Ascending aorta (tissue), 2 donors: ENCODE measurements at regions of chr6 and their contacts with region 1.

Region 1: GRCh38 chr6:27479319-27480182 is 6.6 kb upstream of the ZNF184 start:
- DNase-seq: peak; percentile 53 to 93
- H3K4me3 ChIP-seq: peak overlapping the region; percentile 77 to 94
- H3K27ac ChIP-seq: peak overlapping the region; percentile 98 to 99
- H3K4me1 ChIP-seq: no peaks in the 10 kb centered on the region
- H3K27me3 ChIP-seq: no peaks in the 10 kb centered on the region
- CTCF ChIP-seq: no peak

Region 2: DNA sequence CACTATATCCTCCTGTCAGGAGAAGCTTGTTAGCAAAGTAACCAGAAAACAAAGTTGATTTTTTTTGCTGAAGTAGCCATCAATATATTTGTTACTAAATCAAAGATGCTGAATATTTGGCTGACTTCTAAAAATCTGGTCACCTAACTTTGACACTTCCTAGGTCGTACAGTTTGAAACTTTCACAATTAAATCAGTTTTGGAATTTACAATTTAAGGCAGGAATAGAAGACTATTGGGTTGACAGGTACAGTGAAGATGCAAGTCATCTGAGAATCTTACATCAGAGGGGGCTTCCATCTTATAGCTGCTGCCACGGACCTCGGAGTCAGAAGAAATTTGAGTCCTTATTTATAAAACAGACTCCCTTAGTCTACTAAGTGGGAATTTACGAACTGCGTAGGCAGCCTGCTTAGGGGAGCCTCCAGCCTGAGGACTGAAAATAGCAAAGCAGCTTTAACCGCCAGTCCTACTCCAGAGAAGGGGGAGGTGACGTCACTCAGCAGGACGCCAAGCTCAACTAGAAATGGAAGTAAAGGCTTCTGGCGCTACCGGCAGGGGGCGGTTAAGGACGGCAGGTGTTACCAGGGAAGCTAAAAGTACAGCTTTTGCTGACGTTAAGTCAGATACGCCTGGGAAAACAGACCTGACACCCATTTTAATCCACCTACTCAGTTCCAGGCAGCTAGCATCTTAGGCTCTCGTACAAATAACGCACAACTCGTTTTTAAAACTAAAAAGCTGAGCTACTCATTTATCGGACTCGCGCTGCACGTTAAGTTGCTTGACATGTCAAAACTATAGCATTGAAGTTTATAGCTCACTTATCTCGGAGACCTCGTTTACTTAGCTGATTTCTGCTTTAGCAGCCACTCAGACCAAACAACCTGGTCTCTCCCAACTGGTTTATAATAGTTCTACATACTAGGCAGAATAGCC is 1453.4 kb before region 1 on chr6:
- intact Hi-C with region 1: loop called (anchors 5 kb)
- DNase-seq: peak; percentile 96 to 99
- H3K4me3 ChIP-seq: peak overlapping the region; percentile 64 to 75
- H3K27ac ChIP-seq: peak overlapping the region; percentile 90 to 97
- H3K4me1 ChIP-seq: peaks cover 0 to 19% of the 10 kb centered on the region in 2 donors
- H3K27me3 ChIP-seq: no peaks in the 10 kb centered on the region
- CTCF ChIP-seq: peak; percentile 80 to 87 (median 82)

Region 3: GRCh38 chr6:27188885-27189418 is 290.6 kb before region 1 on chr6:
- intact Hi-C with region 1: loop called (anchors 1 kb)
- DNase-seq: peak in 1 of 2 donors; percentile 76
- H3K4me3 ChIP-seq: peak overlapping the region; percentile 75 to 78
- H3K27ac ChIP-seq: peak overlapping the region; percentile 85 to 90
- H3K4me1 ChIP-seq: peaks cover 0 to 2% of the 10 kb centered on the region in 2 donors
- H3K27me3 ChIP-seq: no peaks in the 10 kb centered on the region
- CTCF ChIP-seq: peak; percentile 63 to 82 (median 71)

Region 4: DNA sequence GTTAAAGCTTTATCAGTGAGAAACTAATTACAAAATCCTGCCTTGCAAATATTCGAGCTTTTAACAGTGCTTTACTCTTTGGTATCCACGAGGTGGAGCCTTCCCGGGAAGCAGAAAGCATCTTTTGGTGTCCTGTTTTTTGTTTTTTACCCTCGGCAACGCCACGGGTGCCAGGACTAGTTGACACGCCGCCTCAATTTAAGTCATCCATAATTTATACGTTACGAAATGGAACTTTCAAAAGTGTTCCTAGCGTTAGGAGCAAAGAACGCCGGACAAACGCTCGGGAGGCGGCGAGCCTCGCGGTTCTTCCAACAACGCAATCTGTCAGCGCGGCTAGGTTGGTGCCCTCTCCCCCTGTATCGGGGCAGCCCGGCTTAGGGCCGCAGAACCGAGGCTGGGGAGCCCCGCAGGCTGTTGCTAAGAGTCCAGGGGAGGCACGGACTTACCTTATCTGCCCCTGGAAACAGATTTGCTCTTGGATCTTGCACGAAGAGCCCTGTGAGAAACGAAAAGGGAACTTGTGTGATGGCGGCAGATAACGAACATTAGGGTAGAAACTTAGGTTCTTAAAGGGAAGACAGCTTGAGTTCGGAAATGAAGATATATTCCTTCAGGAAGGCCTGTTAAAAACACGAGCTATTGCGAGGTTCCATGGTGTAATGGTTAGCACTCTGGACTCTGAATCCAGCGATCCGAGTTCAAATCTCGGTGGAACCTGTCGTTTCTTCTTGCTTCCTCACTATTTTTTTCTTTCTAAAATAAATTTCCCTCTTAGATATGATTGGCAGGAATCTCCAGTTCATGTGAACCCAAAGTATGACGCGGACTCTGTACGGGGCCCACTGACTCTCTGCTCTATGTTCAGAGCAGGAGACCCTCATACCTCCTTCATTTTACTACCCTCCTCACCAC is 39.6 kb after region 1 on chr6:
- intact Hi-C with region 1: loop called (anchors 1 kb)
- DNase-seq: peak in 1 of 2 donors; percentile 77
- H3K4me3 ChIP-seq: peak overlapping the region; percentile 76 to 86
- H3K27ac ChIP-seq: peak overlapping the region; percentile 90 to 94
- H3K4me1 ChIP-seq: peaks cover 0 to 8% of the 10 kb centered on the region in 2 donors
- H3K27me3 ChIP-seq: no peaks in the 10 kb centered on the region
- CTCF ChIP-seq: peak; percentile 31 to 78 (median 71)

Region 5: GRCh38 chr6:27902335-27903314 is 423.1 kb after region 1 on chr6:
- intact Hi-C with region 1: loop called (anchors 2 kb)
- DNase-seq: peak in 1 of 2 donors; percentile 93
- H3K4me3 ChIP-seq: peak overlapping the region; percentile 59 to 73
- H3K27ac ChIP-seq: peak overlapping the region; percentile 87 to 94
- H3K4me1 ChIP-seq: peaks cover 0 to 3% of the 10 kb centered on the region in 2 donors
- H3K27me3 ChIP-seq: no peaks in the 10 kb centered on the region
- CTCF ChIP-seq: no peak